HEK293 (cell line): ENCODE measurements at regions of chr19 and their contacts with region 1.

Region 1: DNA sequence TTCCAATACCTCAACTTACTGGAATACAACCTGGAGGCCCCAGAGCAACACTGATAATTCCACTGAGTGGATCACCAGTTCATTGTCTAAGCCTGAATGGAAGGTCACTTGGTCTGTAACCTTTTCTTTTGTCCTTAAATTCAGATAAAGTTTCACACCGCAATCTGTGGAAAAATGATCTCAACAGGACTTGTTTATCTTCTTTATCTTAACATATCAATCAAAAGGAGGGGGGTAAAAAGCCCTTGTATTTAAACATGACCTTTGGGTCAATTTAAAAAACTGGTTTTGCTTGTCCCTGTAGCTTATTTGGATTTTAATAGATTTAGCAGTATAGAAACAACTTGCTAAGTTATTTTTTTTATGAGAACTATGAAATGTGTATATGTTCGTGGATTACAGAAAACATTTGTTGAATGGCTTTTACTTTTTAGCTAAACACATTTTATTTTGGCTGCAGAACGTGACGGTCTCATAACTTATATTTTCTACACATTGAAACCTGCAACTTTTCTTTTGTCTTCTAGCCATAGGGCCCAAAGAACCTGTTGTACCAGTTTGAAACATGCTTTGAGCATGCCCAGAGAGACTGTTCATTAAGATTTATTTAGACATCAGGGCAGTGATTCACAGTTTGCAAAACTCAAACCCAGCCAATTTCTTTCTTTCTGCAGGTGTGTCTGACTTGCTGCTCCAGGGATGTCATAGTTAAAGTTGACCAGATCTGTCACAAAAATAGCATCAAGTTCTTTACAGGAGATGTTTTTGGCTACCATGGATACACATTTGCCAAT is 21.8 kb downstream of the SAE1 start:
- H3K4me3 ChIP-seq: no peak overlapping the region
- H3K27ac ChIP-seq: peak overlapping the region; percentile 12; the same call in 1 of the 2 replicates
- H3K4me1 ChIP-seq: peaks cover 7% of the 10 kb centered on the region
- CTCF ChIP-seq: no peak

Region 2: GRCh38 chr19:47141695-47142094 is 10.7 kb before region 1 on chr19:
- CTCF ChIA-PET with region 1: no interaction called
- POLR2A ChIA-PET with region 1: no interaction called
- H3K4me3 ChIP-seq: no peak overlapping the region
- H3K27ac ChIP-seq: no peak overlapping the region
- H3K4me1 ChIP-seq: peaks cover 6% of the 10 kb centered on the region; the same call in 1 of the 2 replicates
- CTCF ChIP-seq: no peak

Region 3: GRCh38 chr19:47231215-47231984 is 79.0 kb after region 1 on chr19:
- CTCF ChIA-PET with region 1: interaction called, 12 read pairs
- POLR2A ChIA-PET with region 1: interaction called, 4 read pairs
- H3K4me3 ChIP-seq: peak overlapping the region; percentile 17
- H3K27ac ChIP-seq: peak overlapping the region; percentile 95
- H3K4me1 ChIP-seq: peaks cover 26% of the 10 kb centered on the region
- CTCF ChIP-seq: 0 out of 2 replicates have a peak, but pooled peaks have one; percentile 30